ENCODE measurements at regions of chr5 and their contacts with region 1.

Region 1: GRCh38 chr5:66840511-66841013 is 244.4 kb downstream of the MAST4 start:
- DNase-seq: peak; percentile 85
- H3K4me3 Mint-ChIP-seq: peak overlapping the region; percentile 57
- H3K27ac Mint-ChIP-seq: peak overlapping the region; percentile 94
- H3K4me1 Mint-ChIP-seq: peaks cover 56% of the 10 kb centered on the region
- H3K27me3 Mint-ChIP-seq: no peaks in the 10 kb centered on the region

Region 2: GRCh38 chr5:66828548-66829357 is 11.8 kb before region 1 on chr5:
- intact Hi-C with region 1: loop called (anchors 1 kb)
- DNase-seq: peak; percentile 92
- H3K4me3 Mint-ChIP-seq: peak overlapping the region; percentile 93
- H3K27ac Mint-ChIP-seq: peak overlapping the region; percentile 93
- H3K4me1 Mint-ChIP-seq: peaks cover 56% of the 10 kb centered on the region
- H3K27me3 Mint-ChIP-seq: no peaks in the 10 kb centered on the region

Region 3: GRCh38 chr5:66856041-66856805 is 15.7 kb after region 1 on chr5:
- intact Hi-C with region 1: loop called (anchors 2 kb)
- DNase-seq: no peak
- H3K4me3 Mint-ChIP-seq: no peak overlapping the region
- H3K27ac Mint-ChIP-seq: no peak overlapping the region
- H3K4me1 Mint-ChIP-seq: peaks cover 27% of the 10 kb centered on the region
- H3K27me3 Mint-ChIP-seq: peaks cover 2% of the 10 kb centered on the region

Region 4: GRCh38 chr5:67106626-67107342 is 266.2 kb after region 1 on chr5:
- intact Hi-C with region 1: no loop called
- DNase-seq: peak; percentile 28
- H3K4me3 Mint-ChIP-seq: no peak overlapping the region
- H3K27ac Mint-ChIP-seq: no peak overlapping the region
- H3K4me1 Mint-ChIP-seq: no peaks in the 10 kb centered on the region
- H3K27me3 Mint-ChIP-seq: no peaks in the 10 kb centered on the region